Endothelial cell of umbilical vein (primary cell): ENCODE measurements at regions of chr4 and their contacts with region 1.

Region 1: DNA sequence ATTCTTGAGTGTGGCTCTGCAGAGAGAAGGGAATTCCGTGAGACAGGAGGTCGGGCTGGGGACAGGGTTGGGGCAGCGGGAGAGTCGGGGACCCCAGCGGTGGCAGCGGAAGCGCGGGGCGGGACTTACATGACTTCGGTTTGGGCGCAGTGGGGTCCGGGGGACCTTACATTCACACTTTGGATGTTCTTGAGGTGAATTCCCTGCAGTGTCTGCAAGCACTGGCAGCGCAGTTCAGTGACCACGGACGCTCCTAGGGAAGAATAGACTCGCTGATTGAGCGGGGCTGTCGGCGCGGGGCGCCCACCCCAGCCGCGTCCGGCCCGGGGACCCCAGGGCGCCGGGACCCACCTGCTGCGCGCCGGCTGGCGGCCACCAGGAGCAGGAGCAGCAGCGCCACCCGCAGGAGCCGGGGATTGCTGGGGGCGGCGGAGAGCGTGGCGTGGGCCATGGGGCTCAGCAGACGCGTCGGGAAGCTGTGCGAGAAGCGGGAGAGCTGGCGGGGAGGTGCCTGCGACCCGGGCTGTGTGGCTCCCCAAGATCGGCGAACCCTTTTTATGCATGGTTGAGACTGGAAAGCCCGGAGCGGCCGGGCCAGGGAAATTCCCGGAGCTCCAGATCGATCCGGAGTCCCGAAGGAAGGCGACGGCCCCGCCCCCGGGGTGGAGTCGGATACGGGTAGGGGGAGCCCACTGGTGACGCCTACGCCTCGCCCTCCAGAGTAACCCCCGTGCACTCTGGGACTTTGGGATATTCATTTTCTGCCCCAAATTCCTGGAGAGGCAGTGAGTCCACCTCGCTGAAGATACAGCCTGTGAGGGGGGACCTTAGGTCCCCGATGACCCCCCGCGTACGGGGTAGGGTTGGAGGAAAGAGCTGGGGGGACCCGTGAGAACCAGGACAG is at the start of gene CXCL3:
- DNase-seq: peak; percentile 67
- H3K4me3 ChIP-seq: peak within 1 kb of the TSS; percentile 75 to 86 (median 82)
- H3K27ac ChIP-seq: peak within 1 kb of the TSS; percentile 88
- H3K4me1 ChIP-seq: peaks cover 11% of the 10 kb centered on the region
- H3K27me3 ChIP-seq: no peaks in the 10 kb centered on the region
- CTCF ChIP-seq: peak; percentile 23 to 44
- POLR2A ChIP-seq: peak; percentile 22
- total RNA-seq, gene CXCL3: 1.3 and 1.4 TPM in 2 replicates

Region 2: GRCh38 chr4:73922766-73923630 is 115.4 kb before region 1 on chr4:
- CTCF ChIA-PET with region 1: no interaction called
- POLR2A ChIA-PET with region 1: no interaction called
- dilution Hi-C with region 1: no loop called
- intact Hi-C with region 1: loop called (anchors 2 kb)
- DNase-seq: peak; percentile 76
- H3K4me3 ChIP-seq: no peak overlapping the region
- H3K27ac ChIP-seq: no peak overlapping the region
- H3K4me1 ChIP-seq: peaks cover 10% of the 10 kb centered on the region
- H3K27me3 ChIP-seq: no peaks in the 10 kb centered on the region
- CTCF ChIP-seq: peak; percentile 9 to 14
- POLR2A ChIP-seq: no peak

Region 3: DNA sequence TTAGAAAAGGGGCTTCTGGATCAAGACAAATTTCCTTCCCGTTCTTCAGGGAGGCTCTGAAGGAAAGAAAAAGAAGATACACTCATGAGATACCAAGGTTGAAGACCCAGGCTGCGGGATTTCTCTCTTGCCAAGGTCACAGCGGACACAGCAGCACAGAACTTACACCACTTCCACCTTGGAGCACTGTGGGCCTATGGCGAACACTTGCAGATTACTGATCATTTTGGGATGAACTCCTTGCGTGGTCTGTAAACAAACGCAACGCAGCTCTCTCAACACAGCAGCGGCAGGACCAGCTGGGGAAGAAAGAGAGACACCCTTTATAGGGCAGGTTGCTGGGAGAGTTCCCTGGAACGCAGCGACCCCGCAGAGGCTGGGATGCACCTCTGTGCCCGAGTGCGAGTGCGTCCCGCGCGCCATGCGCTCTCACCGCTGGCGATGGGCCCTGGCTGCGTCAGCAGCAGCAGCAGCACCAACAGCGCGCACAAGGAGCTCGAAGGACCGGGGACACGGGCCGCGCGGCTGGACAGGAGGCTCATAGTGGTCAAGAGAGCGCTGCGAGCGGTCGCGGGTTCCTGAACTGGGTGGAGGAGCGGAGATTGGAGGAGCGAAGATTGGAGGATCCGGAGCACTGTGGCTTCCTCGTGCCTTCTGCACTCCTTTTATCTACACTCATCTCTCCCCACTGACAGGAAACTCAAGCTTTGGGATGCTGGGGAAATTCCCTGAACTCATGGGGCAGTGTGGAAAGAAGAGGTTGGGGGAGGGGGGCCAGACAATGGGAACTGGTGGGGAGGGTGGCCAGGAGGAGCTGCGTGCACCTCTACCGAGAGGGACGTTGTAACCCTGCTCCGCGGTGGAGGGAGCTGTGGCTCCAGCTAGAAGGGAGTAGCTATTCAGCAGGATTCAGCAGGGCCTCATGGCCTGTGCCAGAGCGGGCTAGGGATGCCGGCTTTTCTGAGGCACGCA is 40.1 kb before region 1 on chr4 and contains the start of gene CXCL5:
- CTCF ChIA-PET with region 1: interaction called, 14 read pairs
- POLR2A ChIA-PET with region 1: no interaction called
- dilution Hi-C with region 1: no loop called
- intact Hi-C with region 1: no loop called
- DNase-seq: peak; percentile 41
- H3K4me3 ChIP-seq: peak within 1 kb of the TSS; percentile 13 to 44 (median 40)
- H3K27ac ChIP-seq: no peak within 1 kb of the TSS
- H3K4me1 ChIP-seq: peaks cover 10% of the 10 kb centered on the region
- H3K27me3 ChIP-seq: no peaks in the 10 kb centered on the region
- CTCF ChIP-seq: peak in 1 of 2 donors; percentile 31
- POLR2A ChIP-seq: no peak
- total RNA-seq, gene CXCL5: 0.21 and 0.33 TPM in 2 replicates

Region 4: DNA sequence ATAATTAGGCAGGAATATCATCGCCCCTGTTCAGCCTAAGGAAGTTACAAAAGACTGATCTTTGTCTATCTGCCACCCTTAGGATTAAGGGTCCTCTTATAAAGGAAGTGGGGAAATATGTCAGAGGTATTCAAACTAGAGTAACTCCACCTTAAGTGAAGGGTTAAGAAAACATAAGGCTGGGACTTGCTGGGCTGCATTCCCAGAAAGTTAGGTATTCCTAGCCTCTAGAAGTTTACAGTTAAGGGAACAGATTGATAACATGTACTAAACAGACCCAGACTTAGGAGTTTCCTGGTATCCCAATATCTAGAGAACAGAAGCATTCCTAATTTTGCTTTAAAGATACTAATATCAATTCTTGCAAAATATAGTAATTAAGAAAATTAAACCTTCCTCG is 54.5 kb after region 1 on chr4:
- CTCF ChIA-PET with region 1: interaction called, 33 read pairs
- POLR2A ChIA-PET with region 1: no interaction called
- dilution Hi-C with region 1: no loop called
- intact Hi-C with region 1: loop called (anchors 2 kb)
- DNase-seq: peak; percentile 63
- H3K4me3 ChIP-seq: no peak overlapping the region
- H3K27ac ChIP-seq: peak overlapping the region; percentile 56
- H3K4me1 ChIP-seq: peaks cover 31% of the 10 kb centered on the region
- H3K27me3 ChIP-seq: no peaks in the 10 kb centered on the region
- CTCF ChIP-seq: no peak
- POLR2A ChIP-seq: no peak

Region 5: GRCh38 chr4:74117024-74117534 is 78.7 kb after region 1 on chr4:
- CTCF ChIA-PET with region 1: interaction called, 7 read pairs
- POLR2A ChIA-PET with region 1: no interaction called
- dilution Hi-C with region 1: no loop called
- intact Hi-C with region 1: loop called (anchors 1 kb)
- DNase-seq: peak; percentile 99
- H3K4me3 ChIP-seq: no peak overlapping the region
- H3K27ac ChIP-seq: peak overlapping the region; percentile 91
- H3K4me1 ChIP-seq: peaks cover 18% of the 10 kb centered on the region
- H3K27me3 ChIP-seq: no peaks in the 10 kb centered on the region
- CTCF ChIP-seq: no peak
- POLR2A ChIP-seq: no peak